ENCODE measurements at regions of chr19 and their contacts with region 1.

Region 1: DNA sequence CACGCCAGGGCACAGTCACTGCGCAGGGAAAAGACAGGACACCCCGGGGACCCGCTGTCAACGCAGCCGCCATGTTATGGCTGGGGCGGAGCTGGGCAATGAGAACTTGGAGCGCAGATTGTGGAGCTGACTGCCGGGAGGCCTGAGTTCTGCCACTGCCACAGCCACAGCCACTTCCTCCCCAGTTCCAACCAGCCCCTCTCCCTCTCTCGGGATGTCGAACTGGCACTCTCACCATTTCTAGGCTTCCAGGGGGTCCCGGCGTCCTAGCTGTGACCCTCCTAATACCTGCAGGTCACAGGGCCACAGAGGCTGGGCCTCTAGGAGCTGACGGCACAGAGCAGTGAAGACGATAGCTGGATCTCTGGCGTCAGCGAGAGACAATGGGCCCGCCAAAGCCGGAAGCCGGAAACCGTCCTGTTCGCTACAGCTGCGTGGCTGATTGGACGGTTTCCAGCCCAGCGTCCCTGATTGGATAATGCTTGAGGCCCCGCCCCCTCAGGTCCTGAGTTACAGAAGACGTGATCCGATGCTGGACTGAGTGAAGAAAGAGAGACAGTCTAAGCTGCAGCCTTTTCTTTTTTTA is at the start of gene ZNF506:
- DNase-seq: peak; percentile 79 to 82
- H3K4me3 ChIP-seq: peak within 1 kb of the TSS; percentile 94 to 100 (median 99)
- H3K27ac ChIP-seq: peak within 1 kb of the TSS; percentile 94
- H3K4me1 ChIP-seq: no peaks in the 10 kb centered on the region
- H3K27me3 ChIP-seq: no peaks in the 10 kb centered on the region
- CTCF ChIP-seq: no peak
- EP300 ChIP-seq: no peak
- POLR2A ChIP-seq: peak; percentile 82 to 92
- RAD21 ChIP-seq: no peak
- total RNA-seq, gene ZNF506: 8.0 and 8.3 TPM in 2 replicates

Region 2: DNA sequence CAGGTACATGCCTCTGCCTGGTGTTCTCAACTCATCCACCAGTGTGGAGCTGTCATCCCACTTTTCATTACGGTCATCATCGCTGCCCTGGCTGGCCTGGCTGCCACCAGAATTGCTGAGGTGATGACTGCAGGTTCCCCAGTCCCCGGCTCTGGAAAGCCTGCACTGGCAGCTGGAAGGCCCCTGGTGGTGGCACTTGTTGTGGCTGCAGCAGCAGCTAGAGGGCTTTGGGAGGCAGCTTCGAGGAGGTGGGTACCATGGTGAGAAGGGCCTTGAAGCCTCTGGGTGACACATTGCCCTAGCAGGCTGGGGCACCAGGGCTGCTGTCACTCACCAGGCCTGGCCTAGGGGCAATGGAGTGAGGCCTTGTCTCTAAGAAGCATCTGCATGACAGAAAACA is 63.3 kb before region 1 on chr19:
- CTCF ChIA-PET with region 1: no interaction called
- POLR2A ChIA-PET with region 1: no interaction called
- DNase-seq: no peak
- H3K4me3 ChIP-seq: no peak overlapping the region
- H3K27ac ChIP-seq: no peak overlapping the region
- H3K4me1 ChIP-seq: no peaks in the 10 kb centered on the region
- H3K27me3 ChIP-seq: no peaks in the 10 kb centered on the region; a peak in 1 of 7 replicates
- CTCF ChIP-seq: peak in 2 of 3 experiments; percentile 28 to 30; a peak in 1 of 4 replicates
- EP300 ChIP-seq: no peak
- POLR2A ChIP-seq: no peak
- RAD21 ChIP-seq: peak in 1 of 2 experiments; percentile 6; a peak in 2 of 4 replicates

Region 3: GRCh38 chr19:19805480-19805879 is 16.0 kb before region 1 on chr19:
- CTCF ChIA-PET with region 1: interaction called, 8 read pairs
- POLR2A ChIA-PET with region 1: interaction called, 16 read pairs
- DNase-seq: no peak
- H3K4me3 ChIP-seq: no peak overlapping the region
- H3K27ac ChIP-seq: no peak overlapping the region
- H3K4me1 ChIP-seq: no peaks in the 10 kb centered on the region
- H3K27me3 ChIP-seq: no peaks in the 10 kb centered on the region
- CTCF ChIP-seq: no peak
- EP300 ChIP-seq: no peak
- POLR2A ChIP-seq: no peak
- RAD21 ChIP-seq: no peak

Region 4: DNA sequence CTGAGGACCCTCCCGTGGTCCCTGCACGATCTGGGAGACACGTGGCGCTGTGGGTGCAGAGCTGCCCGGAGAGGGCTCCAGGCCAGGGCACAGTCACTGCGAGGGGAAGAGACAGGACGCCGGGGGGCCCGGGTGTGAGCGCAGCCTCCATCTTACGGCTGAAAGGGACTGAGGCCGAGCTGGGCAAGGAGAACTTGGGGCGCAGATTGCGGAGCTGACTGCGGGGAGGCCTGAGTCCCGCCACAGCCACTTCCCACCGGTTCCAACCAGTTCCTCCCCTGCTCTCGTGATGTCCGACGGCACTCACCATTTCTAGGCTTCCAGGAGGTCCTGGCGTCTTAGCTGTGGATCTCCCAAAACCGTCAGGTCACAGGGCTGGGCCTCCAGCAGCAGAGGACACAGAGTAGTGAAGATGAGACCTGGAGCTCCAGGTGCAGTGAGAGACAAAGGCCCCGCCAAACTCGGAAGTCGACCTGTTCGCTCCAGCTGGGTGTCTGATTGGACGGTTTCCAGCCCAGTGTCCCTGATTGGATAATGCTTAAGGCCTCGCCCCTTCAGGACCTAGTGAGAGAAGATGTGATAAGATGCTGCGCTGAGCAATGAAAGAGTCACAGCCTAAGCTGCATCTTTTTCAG is 39.4 kb after region 1 on chr19:
- CTCF ChIA-PET with region 1: interaction called, 3 read pairs
- POLR2A ChIA-PET with region 1: interaction called, 31 read pairs
- DNase-seq: peak; percentile 87 to 93
- H3K4me3 ChIP-seq: peak overlapping the region; percentile 82 to 98 (median 94)
- H3K27ac ChIP-seq: peak overlapping the region; percentile 95
- H3K4me1 ChIP-seq: peaks cover 0 to 5% (median 0%) of the 10 kb centered on the region in 4 experiments; a peak in 3 of 7 replicates
- H3K27me3 ChIP-seq: no peaks in the 10 kb centered on the region
- CTCF ChIP-seq: no peak
- EP300 ChIP-seq: no peak
- POLR2A ChIP-seq: peak; percentile 96 to 99
- RAD21 ChIP-seq: no peak

Region 5: GRCh38 chr19:19865739-19866481 is 44.5 kb after region 1 on chr19 and contains the start of gene ZNF253:
- CTCF ChIA-PET with region 1: no interaction called
- POLR2A ChIA-PET with region 1: interaction called, 31 read pairs
- DNase-seq: peak; percentile 91 to 97
- H3K4me3 ChIP-seq: peak within 1 kb of the TSS; percentile 84 to 99 (median 90)
- H3K27ac ChIP-seq: peak within 1 kb of the TSS; percentile 100
- H3K4me1 ChIP-seq: peaks cover 0 to 3% (median 1%) of the 10 kb centered on the region in 4 experiments; a peak in 2 of 7 replicates
- H3K27me3 ChIP-seq: no peaks in the 10 kb centered on the region
- CTCF ChIP-seq: no peak; a peak in 1 of 4 replicates
- EP300 ChIP-seq: no peak
- POLR2A ChIP-seq: peak; percentile 99 to 100
- RAD21 ChIP-seq: 0 out of 4 replicates have a peak, but pooled peaks of 1 of the 2 experiments have one; percentile 4
- total RNA-seq, gene ZNF253: 64.0 and 74.6 TPM in 2 replicates